ENCODE measurements at regions of chr14 and their contacts with region 1.

Region 1: DNA sequence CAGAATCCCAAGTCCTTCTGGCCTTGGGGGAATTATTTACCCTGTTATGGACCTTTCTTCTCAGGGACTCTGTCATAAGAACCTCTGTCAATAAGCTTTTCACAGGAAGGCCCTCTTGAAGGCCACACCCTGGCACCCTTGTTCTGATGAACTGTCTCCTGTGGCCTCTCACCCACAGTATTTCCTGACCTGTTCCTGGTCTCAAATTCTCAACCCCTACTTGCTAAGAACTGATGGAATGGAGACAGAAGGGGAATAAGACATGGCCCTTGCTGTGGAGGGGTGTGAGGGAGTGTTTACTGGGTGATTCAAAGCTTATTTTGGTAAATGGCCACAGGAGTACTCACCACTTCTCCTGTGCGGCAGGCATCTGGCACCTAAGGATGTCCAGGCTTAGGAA is 1082.9 kb downstream of the BCL11B start:
- DNase-seq: peak in 1 of 5 donors; percentile 39
- H3K4me3 ChIP-seq: peak overlapping the region; percentile 38 to 42
- H3K4me3 Mint-ChIP-seq: peak overlapping the region; percentile 67 to 85 (median 80)
- H3K27ac ChIP-seq: peak overlapping the region; percentile 65
- H3K27ac Mint-ChIP-seq: peak overlapping the region; percentile 84 to 98 (median 94)
- H3K4me1 ChIP-seq: peaks cover 100% of the 10 kb centered on the region
- H3K4me1 Mint-ChIP-seq: peaks cover 84 to 100% (median 94%) of the 10 kb centered on the region in 4 donors
- H3K27me3 ChIP-seq: no peaks in the 10 kb centered on the region
- H3K27me3 Mint-ChIP-seq: no peaks in the 10 kb centered on the region

Region 2: GRCh38 chr14:98144964-98145363 is 44.1 kb before region 1 on chr14:
- CTCF ChIA-PET with region 1: interaction called, 87 read pairs
- POLR2A ChIA-PET with region 1: interaction called, 106 read pairs
- intact Hi-C with region 1: loop called (anchors 5 kb)
- DNase-seq: no peak
- H3K4me3 ChIP-seq: no peak overlapping the region
- H3K4me3 Mint-ChIP-seq: no peak overlapping the region
- H3K27ac ChIP-seq: no peak overlapping the region
- H3K27ac Mint-ChIP-seq: peak overlapping the region in 1 of 7 donors; percentile 53
- H3K4me1 ChIP-seq: peaks cover 38% of the 10 kb centered on the region
- H3K4me1 Mint-ChIP-seq: peaks cover 35 to 49% (median 37%) of the 10 kb centered on the region in 4 donors
- H3K27me3 ChIP-seq: no peaks in the 10 kb centered on the region
- H3K27me3 Mint-ChIP-seq: no peaks in the 10 kb centered on the region

Region 3: GRCh38 chr14:98173305-98173704 is 15.8 kb before region 1 on chr14:
- CTCF ChIA-PET with region 1: interaction called, 13 read pairs
- POLR2A ChIA-PET with region 1: interaction called, 475 read pairs
- intact Hi-C with region 1: loop called (anchors 1 kb)
- DNase-seq: peak; percentile 74 to 80 (median 77)
- H3K4me3 ChIP-seq: peak overlapping the region in 1 of 2 donors; percentile 33
- H3K4me3 Mint-ChIP-seq: peak overlapping the region; percentile 75 to 87 (median 81)
- H3K27ac ChIP-seq: peak overlapping the region; percentile 64
- H3K27ac Mint-ChIP-seq: peak overlapping the region; percentile 86 to 99 (median 94)
- H3K4me1 ChIP-seq: peaks cover 100% of the 10 kb centered on the region
- H3K4me1 Mint-ChIP-seq: peaks cover 87 to 100% (median 93%) of the 10 kb centered on the region in 4 donors
- H3K27me3 ChIP-seq: no peaks in the 10 kb centered on the region
- H3K27me3 Mint-ChIP-seq: no peaks in the 10 kb centered on the region

Region 4: GRCh38 chr14:98227000-98227726 is 38.1 kb after region 1 on chr14:
- CTCF ChIA-PET with region 1: interaction called, 6 read pairs
- POLR2A ChIA-PET with region 1: interaction called, 116 read pairs
- intact Hi-C with region 1: loop called (anchors 2 kb)
- DNase-seq: peak in 3 of 5 donors; percentile 22 to 24 (median 24)
- H3K4me3 ChIP-seq: peak overlapping the region in 1 of 2 donors; percentile 24
- H3K4me3 Mint-ChIP-seq: peak overlapping the region; percentile 56 to 89 (median 71)
- H3K27ac ChIP-seq: peak overlapping the region; percentile 55
- H3K27ac Mint-ChIP-seq: peak overlapping the region; percentile 89 to 97 (median 90)
- H3K4me1 ChIP-seq: peaks cover 96% of the 10 kb centered on the region
- H3K4me1 Mint-ChIP-seq: peaks cover 67 to 88% (median 77%) of the 10 kb centered on the region in 4 donors
- H3K27me3 ChIP-seq: no peaks in the 10 kb centered on the region
- H3K27me3 Mint-ChIP-seq: no peaks in the 10 kb centered on the region

Region 5: DNA sequence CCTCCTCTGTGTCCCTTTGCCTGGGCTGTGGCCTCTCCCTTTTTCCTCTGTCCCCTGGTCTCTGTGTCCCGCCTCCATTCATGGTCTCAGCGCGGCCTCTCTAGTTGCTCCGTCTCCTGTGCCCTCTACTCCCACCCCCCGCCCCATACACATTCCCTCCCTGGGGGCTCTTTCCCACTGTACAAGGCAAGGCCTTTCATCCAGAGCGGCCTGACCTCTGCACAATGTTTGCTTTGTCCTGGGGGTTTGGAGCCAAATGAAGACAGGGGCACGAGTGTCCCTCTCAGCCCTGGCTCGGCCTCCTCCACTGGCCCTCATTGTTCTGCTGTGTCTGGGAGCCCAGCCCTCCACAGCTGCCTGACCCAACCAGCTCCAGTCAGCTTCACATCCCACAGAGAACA is 404.3 kb after region 1 on chr14:
- CTCF ChIA-PET with region 1: no interaction called
- POLR2A ChIA-PET with region 1: no interaction called
- intact Hi-C with region 1: no loop called
- DNase-seq: no peak
- H3K4me3 ChIP-seq: no peak overlapping the region
- H3K4me3 Mint-ChIP-seq: no peak overlapping the region
- H3K27ac ChIP-seq: no peak overlapping the region
- H3K27ac Mint-ChIP-seq: no peak overlapping the region
- H3K4me1 ChIP-seq: no peaks in the 10 kb centered on the region
- H3K4me1 Mint-ChIP-seq: no peaks in the 10 kb centered on the region
- H3K27me3 ChIP-seq: no peaks in the 10 kb centered on the region
- H3K27me3 Mint-ChIP-seq: no peaks in the 10 kb centered on the region

Region 6: GRCh38 chr14:99192028-99192621 is 1003.1 kb after region 1 on chr14:
- CTCF ChIA-PET with region 1: no interaction called
- POLR2A ChIA-PET with region 1: interaction called, 5 read pairs
- intact Hi-C with region 1: loop called (anchors 5 kb)
- DNase-seq: peak in 3 of 5 donors; percentile 58 to 75 (median 62)
- H3K4me3 ChIP-seq: peak overlapping the region; percentile 48 to 75
- H3K4me3 Mint-ChIP-seq: peak overlapping the region; percentile 81 to 94 (median 88)
- H3K27ac ChIP-seq: peak overlapping the region; percentile 81
- H3K27ac Mint-ChIP-seq: peak overlapping the region; percentile 92 to 99 (median 98)
- H3K4me1 ChIP-seq: peaks cover 94% of the 10 kb centered on the region
- H3K4me1 Mint-ChIP-seq: peaks cover 80 to 97% (median 90%) of the 10 kb centered on the region in 4 donors
- H3K27me3 ChIP-seq: no peaks in the 10 kb centered on the region
- H3K27me3 Mint-ChIP-seq: no peaks in the 10 kb centered on the region